Panc1 (cell line): ENCODE measurements at regions of chr15 and their contacts with region 1.

Region 1: GRCh38 chr15:88454867-88455810 is 12.0 kb downstream of the MRPL46 start:
- DNase-seq: peak; percentile 28
- ATAC-seq: peak; percentile 86
- H3K4me3 ChIP-seq: no peak overlapping the region
- H3K27ac ChIP-seq: no peak overlapping the region
- H3K4me1 ChIP-seq: no peaks in the 10 kb centered on the region
- H3K27me3 ChIP-seq: peaks cover 3% of the 10 kb centered on the region; the same call in 1 of the 2 replicates
- CTCF ChIP-seq: peak; percentile 84

Region 2: DNA sequence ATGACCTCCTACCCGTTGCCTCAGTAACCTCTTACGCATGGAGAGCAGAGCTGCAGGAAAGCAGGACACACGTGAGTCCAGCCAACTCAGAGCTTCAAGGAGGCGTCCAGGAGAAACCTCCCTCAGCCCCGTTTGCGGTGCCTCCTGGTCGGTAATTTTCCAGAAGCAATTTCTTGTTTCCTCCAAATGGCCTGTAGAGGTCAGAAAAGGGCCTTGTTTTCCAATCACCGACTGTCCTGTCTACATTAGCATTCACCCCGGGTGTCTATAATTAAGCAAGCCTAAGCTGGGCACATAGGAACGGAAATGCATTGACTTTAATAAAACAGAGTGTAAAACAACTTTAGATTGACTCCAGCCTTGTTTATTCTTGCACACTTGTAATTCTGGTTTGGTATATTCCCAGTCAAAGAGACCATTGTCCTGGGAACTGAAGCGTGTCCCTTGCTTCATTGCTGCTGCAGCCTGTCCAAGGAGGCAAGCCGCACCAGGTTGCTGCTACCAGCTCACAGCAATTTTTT is 1539.3 kb before region 1 on chr15:
- CTCF ChIA-PET with region 1: no interaction called
- POLR2A ChIA-PET with region 1: no interaction called
- in situ Hi-C with region 1: no loop called
- intact Hi-C with region 1: loop called (anchors 10 kb)
- DNase-seq: no peak
- ATAC-seq: peak; percentile 71; the same call in 1 of the 2 replicates
- H3K4me3 ChIP-seq: no peak overlapping the region
- H3K27ac ChIP-seq: no peak overlapping the region
- H3K4me1 ChIP-seq: no peaks in the 10 kb centered on the region
- H3K27me3 ChIP-seq: peaks cover 9% of the 10 kb centered on the region
- CTCF ChIP-seq: peak; percentile 69

Region 3: GRCh38 chr15:88126695-88127431 is 328.3 kb before region 1 on chr15:
- CTCF ChIA-PET with region 1: no interaction called
- POLR2A ChIA-PET with region 1: no interaction called
- in situ Hi-C with region 1: no loop called
- intact Hi-C with region 1: no loop called
- DNase-seq: no peak
- ATAC-seq: no peak
- H3K4me3 ChIP-seq: no peak overlapping the region
- H3K27ac ChIP-seq: no peak overlapping the region
- H3K4me1 ChIP-seq: no peaks in the 10 kb centered on the region
- H3K27me3 ChIP-seq: no peaks in the 10 kb centered on the region
- CTCF ChIP-seq: no peak

Region 4: GRCh38 chr15:88267720-88268333 is 187.3 kb before region 1 on chr15:
- CTCF ChIA-PET with region 1: no interaction called
- POLR2A ChIA-PET with region 1: no interaction called
- in situ Hi-C with region 1: no loop called
- intact Hi-C with region 1: loop called (anchors 5 kb)
- DNase-seq: no peak
- ATAC-seq: no peak
- H3K4me3 ChIP-seq: no peak overlapping the region
- H3K27ac ChIP-seq: no peak overlapping the region
- H3K4me1 ChIP-seq: no peaks in the 10 kb centered on the region
- H3K27me3 ChIP-seq: peaks cover 5% of the 10 kb centered on the region
- CTCF ChIP-seq: no peak

Region 5: DNA sequence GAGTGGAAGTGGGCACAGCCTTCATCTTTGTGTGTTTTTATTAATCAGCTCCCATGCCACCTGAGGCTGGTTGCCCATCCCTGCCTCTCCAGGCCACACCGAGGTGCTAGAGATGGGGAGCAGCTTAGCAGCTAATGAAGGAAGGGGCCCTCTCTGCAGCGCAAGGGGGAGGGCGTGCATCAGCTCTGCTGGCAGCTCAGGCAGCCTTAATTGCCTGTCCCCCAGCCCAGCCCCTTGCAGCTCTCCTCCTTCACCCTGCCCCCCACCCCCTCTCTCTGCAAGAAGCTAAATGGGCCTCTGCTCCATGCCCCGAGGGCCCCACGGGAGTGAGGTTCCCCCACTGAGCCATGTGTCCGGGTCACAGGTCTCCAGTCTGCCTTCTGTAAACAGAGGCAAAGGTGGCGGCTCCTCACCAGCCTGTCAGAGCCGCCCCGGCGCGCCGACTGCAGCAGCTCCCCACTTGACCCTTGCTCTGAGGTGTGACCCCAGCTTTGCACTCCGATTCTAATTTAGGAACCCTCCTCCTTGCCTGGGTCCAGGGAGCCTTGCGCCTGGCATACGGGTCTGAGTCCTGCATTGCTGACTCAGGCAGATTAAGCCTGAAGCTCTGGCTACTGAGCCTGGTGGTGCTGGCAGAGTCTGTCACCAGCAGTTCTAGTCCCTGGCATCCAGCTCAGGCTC is 170.7 kb before region 1 on chr15:
- CTCF ChIA-PET with region 1: no interaction called
- POLR2A ChIA-PET with region 1: interaction called, 10 read pairs
- in situ Hi-C with region 1: no loop called
- intact Hi-C with region 1: no loop called
- DNase-seq: no peak
- ATAC-seq: no peak
- H3K4me3 ChIP-seq: no peak overlapping the region
- H3K27ac ChIP-seq: no peak overlapping the region
- H3K4me1 ChIP-seq: no peaks in the 10 kb centered on the region
- H3K27me3 ChIP-seq: peaks cover 11% of the 10 kb centered on the region
- CTCF ChIP-seq: no peak

Region 6: DNA sequence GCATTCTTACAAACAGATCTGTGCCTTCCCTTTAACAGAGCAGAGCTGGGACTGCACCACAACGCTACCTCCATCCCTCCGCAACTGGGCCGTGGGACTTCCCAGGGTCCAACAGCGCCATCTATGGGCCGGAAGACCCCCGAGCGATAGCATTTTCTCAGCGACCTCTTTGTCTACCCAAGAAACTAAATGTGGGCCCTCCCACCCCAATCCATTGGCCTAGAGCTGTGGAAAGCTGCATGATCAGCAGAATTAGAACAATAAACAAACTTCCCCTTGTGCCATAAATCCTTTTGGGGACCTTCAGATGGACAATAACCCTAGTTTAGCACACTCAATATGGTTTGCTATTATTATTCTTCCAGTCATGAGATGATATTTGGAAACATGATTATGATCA is 123.9 kb before region 1 on chr15:
- CTCF ChIA-PET with region 1: interaction called, 8 read pairs
- POLR2A ChIA-PET with region 1: no interaction called
- in situ Hi-C with region 1: no loop called
- intact Hi-C with region 1: loop called (anchors 10 kb)
- DNase-seq: peak; percentile 5
- ATAC-seq: peak; percentile 83; the same call in 1 of the 2 replicates
- H3K4me3 ChIP-seq: no peak overlapping the region
- H3K27ac ChIP-seq: no peak overlapping the region
- H3K4me1 ChIP-seq: no peaks in the 10 kb centered on the region
- H3K27me3 ChIP-seq: peaks cover 10% of the 10 kb centered on the region
- CTCF ChIP-seq: peak; percentile 88

Region 7: DNA sequence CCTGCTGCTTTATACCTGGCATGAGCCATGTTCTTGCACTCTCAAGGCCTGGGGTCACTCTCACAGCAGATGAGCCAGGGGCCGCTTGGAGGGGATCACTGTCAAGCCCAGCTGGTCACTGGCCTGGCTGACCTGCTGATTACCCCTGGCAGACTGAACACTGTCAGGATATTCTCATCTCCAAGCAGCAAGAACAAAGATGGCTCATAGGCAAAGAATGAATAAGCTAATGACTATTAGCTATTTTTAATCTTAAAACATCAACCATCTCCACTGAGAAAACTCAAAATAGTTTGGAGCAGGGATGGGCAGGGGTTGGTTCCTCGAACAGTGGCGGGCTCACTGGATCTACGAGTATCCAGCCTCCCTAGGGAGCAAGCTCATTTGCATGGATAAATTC is 283.7 kb after region 1 on chr15:
- CTCF ChIA-PET with region 1: no interaction called
- POLR2A ChIA-PET with region 1: no interaction called
- in situ Hi-C with region 1: no loop called
- intact Hi-C with region 1: no loop called
- DNase-seq: no peak
- ATAC-seq: no peak
- H3K4me3 ChIP-seq: no peak overlapping the region
- H3K27ac ChIP-seq: no peak overlapping the region
- H3K4me1 ChIP-seq: no peaks in the 10 kb centered on the region
- H3K27me3 ChIP-seq: peaks cover 7% of the 10 kb centered on the region
- CTCF ChIP-seq: no peak